Calu3 (cell line): ENCODE measurements at regions of chr1 and their contacts with region 1.

Region 1: GRCh38 chr1:89566761-89567174 is 42.1 kb downstream of the LRRC8B start:
- DNase-seq: no peak
- H3K4me3 Mint-ChIP-seq: no peak overlapping the region
- H3K27ac Mint-ChIP-seq: no peak overlapping the region
- H3K4me1 Mint-ChIP-seq: no peaks in the 10 kb centered on the region
- H3K27me3 Mint-ChIP-seq: no peaks in the 10 kb centered on the region
- CTCF ChIP-seq: no peak

Region 2: GRCh38 chr1:89589515-89589914 is 22.7 kb after region 1 on chr1:
- CTCF ChIA-PET with region 1: no interaction called
- intact Hi-C with region 1: loop called (anchors 2 kb)
- DNase-seq: no peak
- H3K4me3 Mint-ChIP-seq: no peak overlapping the region
- H3K27ac Mint-ChIP-seq: no peak overlapping the region
- H3K4me1 Mint-ChIP-seq: peaks cover 26% of the 10 kb centered on the region
- H3K27me3 Mint-ChIP-seq: no peaks in the 10 kb centered on the region
- CTCF ChIP-seq: no peak